ENCODE measurements at regions of chr12 and their contacts with region 1.

Region 1: GRCh38 chr12:46342562-46343033 is 30.0 kb downstream of the SLC38A2 start:
- DNase-seq: peak; percentile 64
- ATAC-seq: peak; percentile 99
- H3K4me3 ChIP-seq: peak overlapping the region in 1 of 3 experiments; percentile 27; a peak in 2 of 6 replicates
- H3K27ac ChIP-seq: no peak overlapping the region
- H3K4me1 ChIP-seq: peaks cover 14% of the 10 kb centered on the region
- H3K27me3 ChIP-seq: no peaks in the 10 kb centered on the region
- CTCF ChIP-seq: peak; percentile 89
- EP300 ChIP-seq: no peak
- POLR2A ChIP-seq: no peak
- RAD21 ChIP-seq: peak; percentile 87

Region 2: GRCh38 chr12:46292755-46293402 is 49.7 kb before region 1 on chr12:
- CTCF ChIA-PET with region 1: no interaction called
- POLR2A ChIA-PET with region 1: no interaction called
- in situ Hi-C with region 1: no loop called
- intact Hi-C with region 1: loop called (anchors 5 kb)
- DNase-seq: peak; percentile 27
- ATAC-seq: peak; percentile 90
- H3K4me3 ChIP-seq: no peak overlapping the region
- H3K27ac ChIP-seq: no peak overlapping the region
- H3K4me1 ChIP-seq: peaks cover 7% of the 10 kb centered on the region; the same call in 1 of the 2 replicates
- H3K27me3 ChIP-seq: peaks cover 0 to 15% of the 10 kb centered on the region in 2 experiments; a peak in 3 of 5 replicates
- CTCF ChIP-seq: peak; percentile 40; the same call in 1 of the 2 replicates
- EP300 ChIP-seq: no peak
- POLR2A ChIP-seq: no peak
- RAD21 ChIP-seq: no peak

Region 3: GRCh38 chr12:46933947-46934346 is 591.3 kb after region 1 on chr12:
- CTCF ChIA-PET with region 1: interaction called, 5 read pairs
- POLR2A ChIA-PET with region 1: no interaction called
- in situ Hi-C with region 1: loop called (anchors 10 kb)
- intact Hi-C with region 1: loop called (anchors 2 kb)
- DNase-seq: peak; percentile 49
- ATAC-seq: peak; percentile 87
- H3K4me3 ChIP-seq: peak overlapping the region in 2 of 3 experiments; percentile 14 to 31; a peak in 4 of 6 replicates
- H3K27ac ChIP-seq: no peak overlapping the region
- H3K4me1 ChIP-seq: peaks cover 42% of the 10 kb centered on the region
- H3K27me3 ChIP-seq: no peaks in the 10 kb centered on the region
- CTCF ChIP-seq: peak; percentile 83
- EP300 ChIP-seq: no peak
- POLR2A ChIP-seq: no peak
- RAD21 ChIP-seq: peak; percentile 33; the same call in 1 of the 2 replicates

Region 4: DNA sequence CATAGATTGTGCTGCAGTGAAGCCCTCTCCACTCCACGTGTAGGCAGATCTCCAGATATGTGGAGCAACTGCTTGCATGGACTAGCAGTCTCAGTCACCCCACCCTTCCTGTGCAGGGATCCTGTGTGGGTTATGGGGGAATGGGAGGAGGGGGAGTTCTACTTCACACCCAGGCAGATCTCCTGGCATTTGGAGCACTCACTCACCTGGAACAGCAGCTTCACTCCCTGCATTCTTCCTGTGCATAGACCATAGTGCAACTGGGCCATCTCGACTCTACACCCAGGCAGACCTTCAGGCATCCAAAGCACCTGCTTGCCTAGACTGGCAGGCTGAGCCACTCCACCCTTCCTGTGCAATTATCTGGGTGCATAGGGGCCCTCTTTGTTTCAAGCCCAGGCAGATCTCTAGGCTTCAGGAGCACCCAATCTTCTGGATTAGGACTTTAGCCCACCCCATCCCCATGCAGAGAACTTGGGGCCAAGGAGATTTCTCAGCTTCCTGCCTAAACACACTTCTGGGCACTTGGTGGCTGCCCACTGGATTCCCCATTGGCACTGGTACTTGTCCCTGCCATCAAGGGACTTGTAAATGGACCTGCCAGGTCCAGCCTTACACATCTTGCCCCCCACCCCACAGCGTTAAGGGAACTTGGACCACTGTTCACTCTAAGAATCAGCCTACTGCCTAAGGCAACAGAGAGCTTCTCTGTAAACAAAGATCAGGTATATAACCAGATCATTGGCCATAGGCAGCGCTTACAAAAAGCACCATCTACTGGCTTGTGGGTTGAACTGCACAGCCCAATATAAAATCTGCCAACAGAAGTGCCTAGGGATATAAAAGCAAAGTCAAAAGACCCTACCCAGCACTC is 641.0 kb after region 1 on chr12:
- CTCF ChIA-PET with region 1: interaction called, 9 read pairs
- POLR2A ChIA-PET with region 1: no interaction called
- in situ Hi-C with region 1: no loop called
- intact Hi-C with region 1: loop called (anchors 2 kb)
- DNase-seq: peak; percentile 51
- ATAC-seq: peak; percentile 93
- H3K4me3 ChIP-seq: no peak overlapping the region
- H3K27ac ChIP-seq: no peak overlapping the region
- H3K4me1 ChIP-seq: peaks cover 10% of the 10 kb centered on the region; the same call in 1 of the 2 replicates
- H3K27me3 ChIP-seq: 0 out of 5 replicates have a peak, but pooled peaks cover 0 to 3% of the 10 kb centered on the region in 2 experiments
- CTCF ChIP-seq: peak; percentile 84
- EP300 ChIP-seq: no peak
- POLR2A ChIP-seq: no peak
- RAD21 ChIP-seq: peak; percentile 77

Region 5: GRCh38 chr12:47021298-47021697 is 678.7 kb after region 1 on chr12:
- CTCF ChIA-PET with region 1: interaction called, 8 read pairs
- POLR2A ChIA-PET with region 1: no interaction called
- in situ Hi-C with region 1: loop called (anchors 5 kb)
- intact Hi-C with region 1: loop called (anchors 1 kb)
- DNase-seq: peak; percentile 46
- ATAC-seq: peak; percentile 54; the same call in 2 of the 3 replicates
- H3K4me3 ChIP-seq: no peak overlapping the region
- H3K27ac ChIP-seq: no peak overlapping the region
- H3K4me1 ChIP-seq: no peaks in the 10 kb centered on the region
- H3K27me3 ChIP-seq: peaks cover 1 to 7% of the 10 kb centered on the region in 2 experiments; a peak in 3 of 5 replicates
- CTCF ChIP-seq: peak; percentile 81
- EP300 ChIP-seq: no peak
- POLR2A ChIP-seq: no peak
- RAD21 ChIP-seq: peak; percentile 47; the same call in 1 of the 2 replicates